Astrocyte of the cerebellum (primary cell): ENCODE measurements at regions of chr13 and their contacts with region 1.

Region 1: GRCh38 chr13:108352599-108352998 is 83.1 kb downstream of the TNFSF13B start:
- DNase-seq: no peak
- H3K4me3 ChIP-seq: no peak overlapping the region
- CTCF ChIP-seq: no peak

Region 2: GRCh38 chr13:108455320-108455719 is 102.7 kb after region 1 on chr13:
- in situ Hi-C with region 1: loop called (anchors 5 kb)
- DNase-seq: no peak
- H3K4me3 ChIP-seq: no peak overlapping the region
- CTCF ChIP-seq: no peak